ENCODE measurements at regions of chr15 and their contacts with region 1.

Region 1: GRCh38 chr15:64921711-64922110 is 10.0 kb downstream of the ANKDD1A start:
- DNase-seq: no peak
- ATAC-seq: peak in 1 of 2 experiments; percentile 62; a peak in 4 of 6 replicates
- H3K4me3 ChIP-seq: no peak overlapping the region
- H3K27ac ChIP-seq: no peak overlapping the region
- H3K4me1 ChIP-seq: no peaks in the 10 kb centered on the region
- CTCF ChIP-seq: no peak
- EP300 ChIP-seq: no peak
- POLR2A ChIP-seq: no peak
- RAD21 ChIP-seq: no peak

Region 2: GRCh38 chr15:64911311-64912191 is 10.2 kb before region 1 on chr15 and contains the start of gene ANKDD1A:
- CTCF ChIA-PET with region 1: interaction called, 21 read pairs
- POLR2A ChIA-PET with region 1: no interaction called
- DNase-seq: peak; percentile 70 to 94
- ATAC-seq: peak; percentile 94 to 97
- H3K4me3 ChIP-seq: peak within 1 kb of the TSS; percentile 46
- H3K27ac ChIP-seq: peak within 1 kb of the TSS; percentile 56 to 84
- H3K4me1 ChIP-seq: peaks cover 6% of the 10 kb centered on the region; the same call in 2 of the 3 replicates
- CTCF ChIP-seq: no peak
- EP300 ChIP-seq: no peak
- POLR2A ChIP-seq: peak; percentile 62
- RAD21 ChIP-seq: peak in 1 of 2 experiments; percentile 16; a peak in 2 of 5 replicates
- polyA plus RNA-seq, gene ANKDD1A: 2.7 and 3.3 TPM in 2 replicates